HCT116 (cell line): ENCODE measurements at regions of chr9 and their contacts with region 1.

Region 1: DNA sequence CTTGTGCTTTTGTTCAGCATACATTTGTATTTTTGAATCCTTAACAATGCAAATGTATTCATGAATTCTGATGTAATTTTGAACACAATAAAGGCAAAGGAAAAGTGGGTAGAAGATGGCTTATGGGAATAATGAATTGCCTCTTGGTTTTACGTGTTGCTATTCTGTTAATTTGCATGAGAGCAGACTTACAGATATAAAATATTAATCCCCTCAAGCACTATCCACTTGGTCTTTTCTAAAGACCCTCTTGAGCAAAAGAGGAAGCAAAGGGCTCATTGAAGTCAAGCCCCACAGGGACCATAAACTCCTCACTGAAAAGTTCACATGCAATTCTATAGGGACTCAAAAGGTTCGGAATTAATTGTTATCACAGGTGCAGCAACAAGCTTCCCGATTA is 51.9 kb downstream of the OSTF1 start:
- DNase-seq: no peak
- ATAC-seq: no peak
- H3K4me3 ChIP-seq: no peak overlapping the region
- H3K27ac ChIP-seq: no peak overlapping the region
- H3K4me1 ChIP-seq: no peaks in the 10 kb centered on the region
- H3K27me3 ChIP-seq: no peaks in the 10 kb centered on the region
- CTCF ChIP-seq: no peak
- POLR2A ChIP-seq: no peak
- RAD21 ChIP-seq: no peak

Region 2: GRCh38 chr9:75120686-75121085 is 19.6 kb before region 1 on chr9:
- CTCF ChIA-PET with region 1: no interaction called
- POLR2A ChIA-PET with region 1: no interaction called
- RAD21 ChIA-PET with region 1: no interaction called
- intact Hi-C with region 1: loop called (anchors 2 kb)
- DNase-seq: no peak
- ATAC-seq: no peak
- H3K4me3 ChIP-seq: no peak overlapping the region
- H3K27ac ChIP-seq: no peak overlapping the region
- H3K4me1 ChIP-seq: no peaks in the 10 kb centered on the region
- H3K27me3 ChIP-seq: no peaks in the 10 kb centered on the region
- CTCF ChIP-seq: no peak
- POLR2A ChIP-seq: no peak
- RAD21 ChIP-seq: no peak